ENCODE measurements at regions of chr16 and their contacts with region 1.

Region 1: GRCh38 chr16:29915590-29916247 is 10.3 kb downstream of the KCTD13 start:
- H3K4me3 ChIP-seq: no peak overlapping the region
- H3K27ac ChIP-seq: no peak overlapping the region
- H3K4me1 ChIP-seq: no peaks in the 10 kb centered on the region
- CTCF ChIP-seq: no peak

Region 2: GRCh38 chr16:29951625-29952365 is 36.1 kb after region 1 on chr16:
- CTCF ChIA-PET with region 1: no interaction called
- POLR2A ChIA-PET with region 1: no interaction called
- H3K4me3 ChIP-seq: no peak overlapping the region
- H3K27ac ChIP-seq: no peak overlapping the region
- H3K4me1 ChIP-seq: no peaks in the 10 kb centered on the region
- CTCF ChIP-seq: 0 out of 2 replicates have a peak, but pooled peaks have one; percentile 9

Region 3: GRCh38 chr16:29987371-29988085 is 71.8 kb after region 1 on chr16:
- CTCF ChIA-PET with region 1: no interaction called
- POLR2A ChIA-PET with region 1: interaction called, 10 read pairs
- H3K4me3 ChIP-seq: no peak overlapping the region
- H3K27ac ChIP-seq: no peak overlapping the region
- H3K4me1 ChIP-seq: no peaks in the 10 kb centered on the region
- CTCF ChIP-seq: no peak

Region 4: DNA sequence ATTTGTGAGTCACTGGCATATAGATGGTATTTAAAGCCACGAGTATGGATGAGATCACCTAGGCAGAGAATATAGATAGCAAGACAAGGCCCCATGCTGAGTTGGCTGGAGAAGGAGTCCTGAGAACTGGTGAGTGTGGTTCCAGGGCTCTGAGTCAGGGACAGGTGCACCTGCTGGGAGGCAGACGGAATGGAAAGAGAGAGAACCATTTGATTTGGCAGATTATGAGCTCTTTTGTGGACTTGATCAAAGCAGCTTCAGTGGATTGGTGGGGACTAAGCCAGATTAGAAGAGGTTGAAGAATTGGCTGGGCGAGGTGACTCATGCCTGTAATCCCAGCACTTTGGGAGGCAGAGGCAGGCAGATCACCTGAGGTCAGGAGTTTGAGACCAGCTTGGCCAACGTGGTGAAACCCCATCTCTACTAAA is 103.0 kb after region 1 on chr16:
- CTCF ChIA-PET with region 1: no interaction called
- POLR2A ChIA-PET with region 1: interaction called, 10 read pairs
- H3K4me3 ChIP-seq: no peak overlapping the region
- H3K27ac ChIP-seq: no peak overlapping the region
- H3K4me1 ChIP-seq: no peaks in the 10 kb centered on the region
- CTCF ChIP-seq: no peak

Measured in HEK293 (cell line).